ENCODE measurements at regions of chr3 and their contacts with region 1.

Region 1: GRCh38 chr3:27721717-27722542 is at the start of gene EOMES:
- DNase-seq: peak; percentile 68 to 90 (median 78)
- H3K4me3 ChIP-seq: peak within 1 kb of the TSS; percentile 73
- H3K4me3 Mint-ChIP-seq: peak within 1 kb of the TSS; percentile 95 to 100 (median 99)
- H3K27ac ChIP-seq: peak within 1 kb of the TSS; percentile 64
- H3K27ac Mint-ChIP-seq: peak within 1 kb of the TSS; percentile 77 to 98 (median 94)
- H3K4me1 ChIP-seq: peaks cover 25% of the 10 kb centered on the region
- H3K4me1 Mint-ChIP-seq: peaks cover 46 to 57% (median 50%) of the 10 kb centered on the region in 3 donors
- H3K27me3 ChIP-seq: peaks cover 22% of the 10 kb centered on the region
- H3K27me3 Mint-ChIP-seq: peaks cover 29 to 38% of the 10 kb centered on the region in 2 donors
- total RNA-seq, gene EOMES: 37.1 to 37.2 TPM

Region 2: DNA sequence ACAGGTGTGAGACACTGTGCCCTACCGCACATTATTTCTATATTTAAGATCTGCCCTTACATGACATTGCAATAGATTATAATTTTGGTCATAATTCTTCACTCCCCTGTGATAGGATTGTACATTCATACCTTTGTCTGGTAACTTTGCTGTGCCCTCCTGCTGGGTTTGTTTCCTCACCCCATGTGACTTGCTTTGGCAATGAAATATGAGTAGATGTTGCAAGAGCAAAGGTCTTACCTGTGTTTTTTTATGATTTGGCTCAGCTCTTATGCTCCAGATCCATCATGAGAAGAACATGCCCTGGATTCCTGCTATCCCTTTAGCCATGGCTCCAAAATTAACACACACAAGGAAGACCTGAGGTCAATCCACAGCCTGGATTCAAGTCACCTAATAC is 137.9 kb after region 1 on chr3:
- CTCF ChIA-PET with region 1: interaction called, 10 read pairs
- POLR2A ChIA-PET with region 1: no interaction called
- DNase-seq: no peak
- H3K4me3 ChIP-seq: no peak overlapping the region
- H3K4me3 Mint-ChIP-seq: peak overlapping the region in 2 of 7 donors; percentile 19 to 54
- H3K27ac ChIP-seq: no peak overlapping the region
- H3K27ac Mint-ChIP-seq: peak overlapping the region in 1 of 8 donors; percentile 61
- H3K4me1 ChIP-seq: peaks cover 40% of the 10 kb centered on the region
- H3K4me1 Mint-ChIP-seq: peaks cover 56 to 70% (median 61%) of the 10 kb centered on the region in 3 donors
- H3K27me3 ChIP-seq: no peaks in the 10 kb centered on the region
- H3K27me3 Mint-ChIP-seq: no peaks in the 10 kb centered on the region

Region 3: GRCh38 chr3:28077572-28077971 is 355.6 kb after region 1 on chr3:
- CTCF ChIA-PET with region 1: interaction called, 11 read pairs
- POLR2A ChIA-PET with region 1: no interaction called
- DNase-seq: no peak
- H3K4me3 ChIP-seq: no peak overlapping the region
- H3K4me3 Mint-ChIP-seq: no peak overlapping the region
- H3K27ac ChIP-seq: no peak overlapping the region
- H3K27ac Mint-ChIP-seq: no peak overlapping the region
- H3K4me1 ChIP-seq: no peaks in the 10 kb centered on the region
- H3K4me1 Mint-ChIP-seq: peaks cover 3 to 10% (median 9%) of the 10 kb centered on the region in 3 donors
- H3K27me3 ChIP-seq: no peaks in the 10 kb centered on the region
- H3K27me3 Mint-ChIP-seq: peaks cover 0 to 2% of the 10 kb centered on the region in 2 donors

Region 4: GRCh38 chr3:28243424-28244106 is 521.6 kb after region 1 on chr3:
- CTCF ChIA-PET with region 1: interaction called, 22 read pairs
- POLR2A ChIA-PET with region 1: interaction called, 8 read pairs
- DNase-seq: peak in 3 of 5 donors; percentile 10 to 65 (median 57)
- H3K4me3 ChIP-seq: peak overlapping the region; percentile 13
- H3K4me3 Mint-ChIP-seq: peak overlapping the region; percentile 53 to 98 (median 93)
- H3K27ac ChIP-seq: no peak overlapping the region
- H3K27ac Mint-ChIP-seq: peak overlapping the region; percentile 49 to 91 (median 67)
- H3K4me1 ChIP-seq: peaks cover 72% of the 10 kb centered on the region
- H3K4me1 Mint-ChIP-seq: peaks cover 74 to 91% (median 84%) of the 10 kb centered on the region in 3 donors
- H3K27me3 ChIP-seq: no peaks in the 10 kb centered on the region
- H3K27me3 Mint-ChIP-seq: no peaks in the 10 kb centered on the region

Region 5: DNA sequence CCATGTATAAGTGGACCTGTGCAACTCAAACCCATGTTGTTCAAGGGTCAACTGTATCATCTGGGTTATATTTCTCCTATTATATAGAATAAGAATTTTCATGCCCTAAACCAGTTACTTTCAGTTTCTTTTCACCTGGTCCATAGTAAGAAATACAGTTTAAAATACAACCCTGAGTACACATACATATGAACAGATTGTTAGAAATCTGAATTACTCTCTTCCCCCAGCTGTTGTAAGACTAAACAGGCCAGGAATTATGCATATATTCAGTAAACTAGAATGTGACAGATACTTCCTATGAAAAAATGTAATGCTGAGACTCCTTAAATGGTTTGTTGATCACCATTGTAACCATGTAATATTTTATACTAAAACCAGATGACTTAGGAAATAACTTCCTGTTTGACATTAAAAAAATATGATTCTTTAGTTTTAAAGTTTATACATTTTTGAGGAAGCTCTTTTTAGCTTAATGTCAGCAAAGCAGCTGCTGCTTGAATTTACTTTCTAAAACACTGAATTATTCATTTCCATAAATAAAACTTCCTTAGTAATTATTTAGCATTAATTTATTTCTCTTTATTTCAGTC is 574.1 kb after region 1 on chr3:
- CTCF ChIA-PET with region 1: interaction called, 11 read pairs
- POLR2A ChIA-PET with region 1: no interaction called
- DNase-seq: no peak
- H3K4me3 ChIP-seq: no peak overlapping the region
- H3K4me3 Mint-ChIP-seq: peak overlapping the region; percentile 67 to 88 (median 79)
- H3K27ac ChIP-seq: no peak overlapping the region
- H3K27ac Mint-ChIP-seq: peak overlapping the region in 7 of 8 donors; percentile 19 to 91 (median 80)
- H3K4me1 ChIP-seq: peaks cover 3% of the 10 kb centered on the region
- H3K4me1 Mint-ChIP-seq: peaks cover 51 to 75% (median 73%) of the 10 kb centered on the region in 3 donors
- H3K27me3 ChIP-seq: no peaks in the 10 kb centered on the region
- H3K27me3 Mint-ChIP-seq: no peaks in the 10 kb centered on the region

Region 6: GRCh38 chr3:28328188-28329151 is 606.5 kb after region 1 on chr3:
- CTCF ChIA-PET with region 1: interaction called, 66 read pairs
- POLR2A ChIA-PET with region 1: interaction called, 59 read pairs
- DNase-seq: peak in 2 of 5 donors; percentile 41 to 49
- H3K4me3 ChIP-seq: no peak overlapping the region
- H3K4me3 Mint-ChIP-seq: peak overlapping the region in 4 of 7 donors; percentile 19 to 54 (median 40)
- H3K27ac ChIP-seq: no peak overlapping the region
- H3K27ac Mint-ChIP-seq: peak overlapping the region in 4 of 8 donors; percentile 35 to 81 (median 52)
- H3K4me1 ChIP-seq: peaks cover 24% of the 10 kb centered on the region
- H3K4me1 Mint-ChIP-seq: peaks cover 41 to 58% (median 57%) of the 10 kb centered on the region in 3 donors
- H3K27me3 ChIP-seq: no peaks in the 10 kb centered on the region
- H3K27me3 Mint-ChIP-seq: no peaks in the 10 kb centered on the region

Region 7: DNA sequence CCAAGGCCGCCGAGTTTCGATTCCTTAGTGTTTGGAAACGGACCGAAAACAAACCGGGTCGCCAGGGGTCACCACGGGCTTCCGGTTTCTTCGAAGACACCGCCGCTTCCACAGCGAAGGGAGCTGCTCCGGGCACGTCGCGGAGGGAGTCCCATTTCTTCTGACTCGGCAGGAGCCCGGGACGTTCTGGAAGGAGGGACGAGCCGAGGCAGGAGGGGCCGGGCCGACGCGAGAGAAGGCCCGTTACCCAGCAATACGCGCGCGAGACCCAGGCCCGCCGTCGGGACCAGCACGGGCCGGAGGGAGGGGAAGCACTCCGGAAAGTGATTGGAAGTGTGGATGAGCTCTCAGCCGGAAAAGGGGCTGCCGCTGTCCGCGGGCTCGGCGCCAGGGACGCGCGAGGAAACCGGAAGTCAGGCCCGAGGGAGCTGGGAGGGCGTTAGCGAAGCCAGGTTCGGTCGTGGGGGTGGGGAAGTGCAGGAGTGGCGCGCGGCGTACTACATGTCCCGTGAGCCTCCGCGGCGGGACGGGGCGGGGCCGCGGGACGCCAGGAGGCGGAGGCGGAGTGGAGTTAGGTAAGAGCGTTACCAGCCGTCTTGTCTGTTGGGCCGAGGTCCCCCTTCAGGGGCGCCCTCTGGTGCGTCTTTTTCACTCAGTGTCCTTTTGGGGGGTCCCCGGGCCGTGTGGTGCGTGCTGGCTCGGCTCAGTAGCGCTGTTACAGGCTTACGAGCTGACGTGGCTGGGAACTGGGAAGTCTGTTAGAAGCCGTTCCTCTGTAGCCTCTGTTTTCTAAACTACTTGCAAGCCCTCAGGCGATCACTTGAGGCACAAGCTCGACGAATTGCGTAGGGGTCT is 626.9 kb after region 1 on chr3 and contains the starts of genes AZI2 and ZCWPW2:
- CTCF ChIA-PET with region 1: interaction called, 10 read pairs
- POLR2A ChIA-PET with region 1: interaction called, 5 read pairs
- DNase-seq: peak; percentile 87 to 95 (median 90)
- H3K4me3 ChIP-seq: peak within 1 kb of the TSS; percentile 92
- H3K4me3 Mint-ChIP-seq: peak within 1 kb of the TSS; percentile 96 to 100 (median 98)
- H3K27ac ChIP-seq: peak within 1 kb of the TSS; percentile 97
- H3K27ac Mint-ChIP-seq: peak within 1 kb of the TSS; percentile 95 to 100 (median 99)
- H3K4me1 ChIP-seq: peaks cover 34% of the 10 kb centered on the region
- H3K4me1 Mint-ChIP-seq: peaks cover 55 to 74% (median 68%) of the 10 kb centered on the region in 3 donors
- H3K27me3 ChIP-seq: no peaks in the 10 kb centered on the region
- H3K27me3 Mint-ChIP-seq: no peaks in the 10 kb centered on the region
- total RNA-seq, gene AZI2: 34.5 to 36.4 TPM
- total RNA-seq, gene ZCWPW2: 0.20 to 0.27 TPM

Measured in CD8-positive, alpha-beta memory T cell (primary cell).